HepG2 (cell line): ENCODE measurements at regions of chr10 and their contacts with region 1.

Region 1: GRCh38 chr10:103598654-103599115 is 105.2 kb downstream of the NEURL1 start:
- DNase-seq: peak; percentile 72
- ATAC-seq: peak; percentile 74
- H3K4me3 ChIP-seq: no peak overlapping the region
- H3K27ac ChIP-seq: no peak overlapping the region
- H3K4me1 ChIP-seq: no peaks in the 10 kb centered on the region
- H3K27me3 ChIP-seq: no peaks in the 10 kb centered on the region
- CTCF ChIP-seq: peak; percentile 86
- EP300 ChIP-seq: no peak
- POLR2A ChIP-seq: no peak; a peak in 1 of 4 replicates
- RAD21 ChIP-seq: peak; percentile 72

Region 2: DNA sequence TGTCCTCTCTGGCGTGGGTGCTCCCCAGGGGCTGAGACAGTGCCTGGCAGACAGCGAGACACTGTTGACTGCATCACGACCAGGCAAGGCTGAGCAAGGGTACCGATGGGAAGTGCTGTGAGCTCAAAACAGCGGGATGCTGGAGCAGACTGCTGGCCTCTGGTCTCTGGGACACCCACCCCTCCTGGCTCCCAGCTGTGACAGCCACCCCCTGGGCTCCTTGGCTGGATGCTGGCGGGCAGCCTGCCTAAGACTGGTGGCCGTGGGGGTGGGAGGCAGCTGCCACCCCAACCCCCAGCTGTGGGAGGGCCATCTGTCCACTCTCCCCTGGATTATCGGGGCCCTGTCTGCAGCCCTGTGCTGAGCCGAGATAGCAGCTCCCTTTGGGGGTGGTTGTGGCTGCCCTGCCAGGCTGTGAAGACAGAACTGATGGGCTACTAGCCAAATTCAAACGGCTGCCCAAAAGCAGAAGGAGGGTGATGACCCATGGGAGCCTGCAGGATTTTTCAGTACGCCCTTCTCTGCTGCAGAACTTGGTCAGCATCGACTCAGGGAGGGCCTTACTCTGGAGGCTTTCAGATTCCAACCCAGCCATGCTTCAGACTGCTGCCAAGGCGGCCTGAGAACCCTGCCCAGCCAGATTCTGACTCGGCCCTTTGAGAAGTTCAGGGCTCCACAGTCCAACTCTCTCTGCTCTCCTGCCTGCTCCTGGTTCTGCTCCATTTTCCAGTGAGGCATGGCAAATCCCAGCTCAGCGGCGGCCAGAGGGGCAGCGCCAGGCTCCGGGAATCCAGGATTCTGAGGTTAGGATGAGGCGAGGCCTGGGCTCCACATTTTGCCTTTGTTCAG is 20.1 kb after region 1 on chr10:
- CTCF ChIA-PET with region 1: no interaction called
- POLR2A ChIA-PET with region 1: no interaction called
- in situ Hi-C with region 1: no loop called
- intact Hi-C with region 1: no loop called
- DNase-seq: no peak
- ATAC-seq: no peak
- H3K4me3 ChIP-seq: no peak overlapping the region
- H3K27ac ChIP-seq: no peak overlapping the region
- H3K4me1 ChIP-seq: no peaks in the 10 kb centered on the region
- H3K27me3 ChIP-seq: no peaks in the 10 kb centered on the region
- CTCF ChIP-seq: no peak
- EP300 ChIP-seq: no peak
- POLR2A ChIP-seq: 0 out of 4 replicates have a peak, but pooled peaks of 1 of the 2 experiments have one; percentile 39
- RAD21 ChIP-seq: no peak

Region 3: GRCh38 chr10:103666087-103666761 is 67.5 kb after region 1 on chr10:
- CTCF ChIA-PET with region 1: interaction called, 10 read pairs
- POLR2A ChIA-PET with region 1: no interaction called
- in situ Hi-C with region 1: loop called (anchors 5 kb)
- intact Hi-C with region 1: no loop called
- DNase-seq: no peak
- ATAC-seq: no peak
- H3K4me3 ChIP-seq: no peak overlapping the region
- H3K27ac ChIP-seq: no peak overlapping the region
- H3K4me1 ChIP-seq: peaks cover 24% of the 10 kb centered on the region
- H3K27me3 ChIP-seq: no peaks in the 10 kb centered on the region
- CTCF ChIP-seq: peak; percentile 58
- EP300 ChIP-seq: no peak
- POLR2A ChIP-seq: no peak
- RAD21 ChIP-seq: no peak

Region 4: GRCh38 chr10:103685880-103686669 is 87.4 kb after region 1 on chr10:
- CTCF ChIA-PET with region 1: interaction called, 18 read pairs
- POLR2A ChIA-PET with region 1: no interaction called
- in situ Hi-C with region 1: no loop called
- intact Hi-C with region 1: loop called (anchors 1 kb)
- DNase-seq: peak; percentile 36
- ATAC-seq: peak; percentile 84
- H3K4me3 ChIP-seq: no peak overlapping the region
- H3K27ac ChIP-seq: no peak overlapping the region
- H3K4me1 ChIP-seq: no peaks in the 10 kb centered on the region
- H3K27me3 ChIP-seq: no peaks in the 10 kb centered on the region
- CTCF ChIP-seq: peak; percentile 92
- EP300 ChIP-seq: no peak
- POLR2A ChIP-seq: no peak
- RAD21 ChIP-seq: peak; percentile 73